Activated CD4-positive, alpha-beta T cell treated with anti-CD3 and anti-CD28 coated beads, Interleukin-2, amount 10 ng/mL, durations not matched to agents 24 days and 14 days (primary cell): ENCODE measurements at regions of chr2 and their contacts with region 1.

Region 1: DNA sequence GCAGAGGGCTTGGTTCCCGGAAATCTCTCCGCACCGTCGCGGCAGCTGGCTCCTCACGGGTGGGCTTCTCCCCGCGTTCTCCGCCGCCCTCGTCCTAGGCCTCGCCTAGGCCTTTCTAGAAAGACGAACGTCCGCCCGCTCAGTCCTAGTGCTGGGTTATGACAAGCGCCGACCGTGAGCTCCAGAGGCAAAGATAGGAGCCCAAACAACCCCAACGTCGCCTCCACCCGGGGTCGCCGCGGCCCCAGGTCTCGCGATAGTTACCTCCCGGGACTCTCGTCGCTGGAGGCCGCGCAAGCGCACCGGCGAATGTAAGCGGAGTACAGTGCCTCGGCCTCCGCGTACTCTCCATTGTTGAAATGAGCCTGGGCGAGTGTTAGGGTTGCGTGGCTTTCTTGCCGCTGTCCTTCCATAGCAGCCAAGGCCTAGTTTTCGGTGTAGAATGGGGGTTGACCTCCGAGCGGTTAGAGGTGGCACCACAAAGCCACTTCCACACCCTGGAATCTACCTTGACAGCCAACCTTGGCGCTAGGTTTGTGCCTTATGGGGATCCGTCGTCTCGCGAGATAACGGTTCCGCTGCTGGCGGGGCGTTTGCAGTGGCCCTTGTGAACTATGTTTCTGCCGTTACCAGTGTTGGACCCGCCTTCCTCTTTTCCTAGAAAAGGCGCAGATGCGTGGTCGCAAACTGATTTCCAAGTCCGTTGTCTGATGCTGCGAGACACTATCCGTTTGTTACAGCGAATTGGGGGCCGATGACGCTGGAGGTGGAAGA is at the start of gene TTC32:
- DNase-seq: peak; percentile 98
- H3K4me3 Mint-ChIP-seq: peak within 1 kb of the TSS; percentile 94
- H3K27ac Mint-ChIP-seq: peak within 1 kb of the TSS; percentile 91
- H3K4me1 Mint-ChIP-seq: peaks cover 34% of the 10 kb centered on the region
- H3K27me3 Mint-ChIP-seq: peaks cover 13% of the 10 kb centered on the region
- total RNA-seq, gene TTC32: 10.5 and 11.0 TPM in 2 replicates

Region 2: GRCh38 chr2:19347619-19348562 is 553.7 kb before region 1 on chr2:
- intact Hi-C with region 1: loop called (anchors 1 kb)
- DNase-seq: peak; percentile 100
- H3K4me3 Mint-ChIP-seq: peak overlapping the region; percentile 93
- H3K27ac Mint-ChIP-seq: peak overlapping the region; percentile 99
- H3K4me1 Mint-ChIP-seq: peaks cover 20% of the 10 kb centered on the region
- H3K27me3 Mint-ChIP-seq: peaks cover 33% of the 10 kb centered on the region

Region 3: GRCh38 chr2:19887510-19887909 is 14.1 kb before region 1 on chr2:
- intact Hi-C with region 1: no loop called
- DNase-seq: no peak
- H3K4me3 Mint-ChIP-seq: no peak overlapping the region
- H3K27ac Mint-ChIP-seq: no peak overlapping the region
- H3K4me1 Mint-ChIP-seq: peaks cover 11% of the 10 kb centered on the region
- H3K27me3 Mint-ChIP-seq: no peaks in the 10 kb centered on the region

Region 4: DNA sequence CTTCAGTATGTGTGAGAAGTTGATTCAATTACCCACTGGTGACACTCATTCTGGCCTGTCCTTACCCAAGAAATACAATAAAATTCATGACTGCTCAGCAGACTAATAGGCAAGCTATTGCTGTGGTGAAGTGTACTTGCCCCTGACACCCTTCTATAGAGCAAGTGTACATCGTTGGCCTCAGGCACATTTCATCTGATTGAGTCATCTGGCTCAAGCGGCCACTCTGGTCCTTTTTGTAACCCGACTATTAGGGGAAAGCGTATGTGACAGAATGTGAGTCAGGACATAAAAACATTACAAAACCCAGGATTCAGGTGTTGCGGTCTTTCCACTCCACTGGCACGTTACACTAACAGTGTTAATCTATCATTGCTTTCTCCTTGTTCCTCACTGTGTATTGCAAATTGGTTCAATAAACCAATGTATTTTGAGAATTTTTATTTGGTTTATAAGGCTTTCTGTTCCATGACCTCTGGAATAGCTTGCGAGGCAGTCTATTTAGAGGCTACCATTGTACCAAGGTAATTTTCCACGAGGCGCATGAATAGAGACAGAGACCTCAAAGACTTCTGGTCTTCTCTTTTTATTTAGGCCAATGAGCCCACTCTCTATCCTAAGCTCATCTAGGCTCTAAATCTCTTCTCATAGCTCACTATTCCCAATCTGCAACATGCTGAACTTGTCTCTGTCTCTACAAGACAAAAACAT is 10.3 kb after region 1 on chr2:
- intact Hi-C with region 1: no loop called
- DNase-seq: peak; percentile 34
- H3K4me3 Mint-ChIP-seq: no peak overlapping the region
- H3K27ac Mint-ChIP-seq: no peak overlapping the region
- H3K4me1 Mint-ChIP-seq: no peaks in the 10 kb centered on the region
- H3K27me3 Mint-ChIP-seq: peaks cover 8% of the 10 kb centered on the region

Region 5: DNA sequence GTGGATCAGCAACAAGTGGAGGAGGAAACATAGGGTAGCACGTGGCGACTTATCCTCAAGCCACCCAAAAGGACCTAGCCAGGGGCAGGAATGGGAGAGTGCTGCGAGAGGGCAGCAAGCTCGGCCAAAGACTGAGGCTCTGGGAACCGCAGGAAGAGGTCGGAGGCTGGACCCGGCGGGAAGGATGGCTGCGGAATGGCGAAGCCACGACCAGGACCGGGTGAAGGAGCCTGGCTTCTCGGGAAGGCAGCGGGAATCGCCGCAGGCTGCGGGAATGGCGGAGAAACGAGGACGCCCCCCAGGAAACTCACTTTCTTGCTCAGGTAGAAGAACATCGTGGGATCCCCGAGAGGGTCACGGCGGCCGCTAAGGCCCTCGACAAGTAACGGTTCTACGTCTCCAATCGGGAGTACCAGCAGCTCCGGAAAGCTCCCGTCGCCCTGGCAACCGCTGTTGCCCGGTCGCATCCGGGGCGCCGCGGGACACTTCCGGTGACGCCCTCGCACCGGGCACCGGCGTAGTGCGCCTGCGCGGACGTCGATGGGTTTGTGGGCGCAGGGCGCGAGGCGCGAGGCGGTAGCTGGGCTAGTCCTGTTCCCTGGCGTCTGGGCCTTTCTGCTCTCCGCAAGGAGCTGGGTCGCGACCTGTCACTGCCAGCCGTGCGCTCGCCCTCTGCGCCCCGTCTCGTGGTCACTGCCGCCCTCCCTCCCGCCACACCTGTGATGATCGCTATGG is 88.2 kb after region 1 on chr2 and contains the start of gene WDR35:
- intact Hi-C with region 1: loop called (anchors 2 kb)
- DNase-seq: peak; percentile 98
- H3K4me3 Mint-ChIP-seq: peak within 1 kb of the TSS; percentile 92
- H3K27ac Mint-ChIP-seq: peak within 1 kb of the TSS; percentile 88
- H3K4me1 Mint-ChIP-seq: peaks cover 15% of the 10 kb centered on the region
- H3K27me3 Mint-ChIP-seq: peaks cover 28% of the 10 kb centered on the region
- total RNA-seq, gene WDR35: 8.1 and 9.0 TPM in 2 replicates

Region 6: DNA sequence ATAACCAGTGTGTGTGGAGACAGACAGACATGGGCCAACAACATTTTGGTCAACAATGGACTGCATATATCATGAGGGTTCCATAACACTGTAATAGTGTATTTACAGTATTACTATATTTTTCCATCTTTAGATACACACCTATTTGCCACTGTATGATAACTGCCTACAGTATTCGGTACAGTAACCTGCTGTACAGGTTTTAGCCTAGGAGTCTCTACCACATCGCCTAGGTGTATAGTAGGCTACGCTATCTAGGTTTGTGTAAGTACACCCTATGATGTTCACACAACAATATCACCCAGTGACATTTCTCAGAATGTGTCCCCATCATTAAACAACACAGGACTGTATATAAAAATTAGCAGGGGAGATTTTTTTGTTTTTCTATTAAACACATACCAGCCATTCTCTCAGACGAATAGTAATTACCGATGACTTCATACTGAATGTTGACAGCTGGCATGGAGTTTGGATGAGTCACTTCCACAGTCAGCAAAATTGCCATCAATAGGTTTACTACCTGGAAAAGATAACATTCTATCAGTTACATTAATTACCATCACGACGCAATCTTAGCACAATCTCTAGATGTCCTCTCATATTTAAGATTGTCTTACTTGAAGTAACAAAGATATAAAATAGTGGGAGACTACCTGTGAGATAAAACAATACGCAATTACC is 139.0 kb after region 1 on chr2:
- intact Hi-C with region 1: no loop called
- DNase-seq: no peak
- H3K4me3 Mint-ChIP-seq: no peak overlapping the region
- H3K27ac Mint-ChIP-seq: no peak overlapping the region
- H3K4me1 Mint-ChIP-seq: peaks cover 17% of the 10 kb centered on the region
- H3K27me3 Mint-ChIP-seq: no peaks in the 10 kb centered on the region

Region 7: DNA sequence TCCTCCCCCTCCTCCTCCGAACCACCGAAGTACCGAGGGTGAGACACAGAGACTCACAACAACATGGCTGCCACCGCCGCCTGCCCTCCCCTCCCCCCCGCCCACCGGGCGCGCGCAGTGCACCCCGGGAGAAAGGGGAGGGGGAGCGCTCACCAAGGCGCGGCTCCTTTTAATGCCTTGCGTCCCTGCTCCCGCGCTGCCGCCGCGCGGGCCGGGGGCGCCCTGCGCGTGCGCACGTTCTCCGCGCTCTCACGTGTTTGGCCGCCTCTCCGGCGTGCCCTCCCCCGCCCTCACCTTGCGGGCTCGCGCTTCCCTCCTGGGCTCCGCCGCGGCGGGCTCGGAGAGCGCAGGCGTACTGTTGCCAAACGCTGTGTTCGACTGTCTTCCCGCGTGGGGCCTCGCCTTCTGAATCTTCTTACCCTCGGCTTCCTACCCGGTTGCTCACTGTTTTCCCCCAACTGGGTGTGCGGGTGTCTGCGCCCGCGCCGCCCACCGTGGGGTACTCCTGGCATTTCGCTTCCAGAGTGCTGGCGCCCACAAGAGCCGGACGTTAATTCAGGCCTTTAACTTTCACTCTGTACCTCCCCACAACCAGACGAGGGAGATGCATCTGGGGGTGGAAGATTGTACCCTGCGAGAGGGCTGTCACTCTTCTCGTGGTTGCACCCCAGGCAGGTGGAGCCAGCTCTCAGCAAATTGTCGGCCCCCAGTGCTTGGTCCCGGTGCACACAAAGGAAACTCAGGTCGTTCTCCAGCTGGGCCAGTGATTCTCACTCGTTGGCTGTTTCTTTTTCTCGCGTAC is 449.3 kb after region 1 on chr2 and contains the start of gene PUM2:
- intact Hi-C with region 1: loop called (anchors 5 kb)
- DNase-seq: peak; percentile 99
- H3K4me3 Mint-ChIP-seq: no peak within 1 kb of the TSS
- H3K27ac Mint-ChIP-seq: peak within 1 kb of the TSS; percentile 95
- H3K4me1 Mint-ChIP-seq: peaks cover 23% of the 10 kb centered on the region
- H3K27me3 Mint-ChIP-seq: no peaks in the 10 kb centered on the region
- total RNA-seq, gene PUM2: 122 and 130 TPM in 2 replicates

Region 8: DNA sequence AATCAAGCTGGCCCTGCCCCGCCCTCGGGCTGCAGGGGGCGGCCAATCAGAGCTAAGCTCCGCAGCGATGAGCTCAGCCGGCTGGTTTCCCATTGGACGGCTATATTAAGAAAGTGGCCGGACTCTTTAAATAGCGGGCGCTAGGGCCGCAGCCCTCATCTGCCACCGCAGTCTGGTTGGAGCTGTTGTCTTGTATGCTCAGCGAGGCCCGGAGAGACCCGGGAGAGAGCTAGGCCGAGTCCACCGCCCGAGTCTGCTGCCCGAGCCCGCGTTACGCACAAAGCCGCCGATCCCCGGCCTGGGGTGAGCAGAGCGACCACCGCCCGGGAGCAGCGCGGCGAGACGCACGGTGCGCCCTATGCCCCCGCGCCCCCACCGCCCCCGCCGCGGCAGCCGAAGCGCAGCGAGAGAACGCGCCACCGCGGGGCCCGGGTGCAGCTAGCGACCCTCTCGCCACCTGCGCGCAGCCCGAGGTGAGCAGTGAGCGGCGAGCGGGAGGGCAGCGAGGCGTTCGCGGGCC is 545.3 kb after region 1 on chr2 and contains the start of gene RHOB:
- intact Hi-C with region 1: loop called (anchors 10 kb)
- DNase-seq: peak; percentile 96
- H3K4me3 Mint-ChIP-seq: peak within 1 kb of the TSS; percentile 77
- H3K27ac Mint-ChIP-seq: peak within 1 kb of the TSS; percentile 74
- H3K4me1 Mint-ChIP-seq: peaks cover 6% of the 10 kb centered on the region
- H3K27me3 Mint-ChIP-seq: peaks cover 57% of the 10 kb centered on the region
- total RNA-seq, gene RHOB: 16.4 and 18.5 TPM in 2 replicates